ENCODE measurements at regions of chr3 and their contacts with region 1.

Region 1: DNA sequence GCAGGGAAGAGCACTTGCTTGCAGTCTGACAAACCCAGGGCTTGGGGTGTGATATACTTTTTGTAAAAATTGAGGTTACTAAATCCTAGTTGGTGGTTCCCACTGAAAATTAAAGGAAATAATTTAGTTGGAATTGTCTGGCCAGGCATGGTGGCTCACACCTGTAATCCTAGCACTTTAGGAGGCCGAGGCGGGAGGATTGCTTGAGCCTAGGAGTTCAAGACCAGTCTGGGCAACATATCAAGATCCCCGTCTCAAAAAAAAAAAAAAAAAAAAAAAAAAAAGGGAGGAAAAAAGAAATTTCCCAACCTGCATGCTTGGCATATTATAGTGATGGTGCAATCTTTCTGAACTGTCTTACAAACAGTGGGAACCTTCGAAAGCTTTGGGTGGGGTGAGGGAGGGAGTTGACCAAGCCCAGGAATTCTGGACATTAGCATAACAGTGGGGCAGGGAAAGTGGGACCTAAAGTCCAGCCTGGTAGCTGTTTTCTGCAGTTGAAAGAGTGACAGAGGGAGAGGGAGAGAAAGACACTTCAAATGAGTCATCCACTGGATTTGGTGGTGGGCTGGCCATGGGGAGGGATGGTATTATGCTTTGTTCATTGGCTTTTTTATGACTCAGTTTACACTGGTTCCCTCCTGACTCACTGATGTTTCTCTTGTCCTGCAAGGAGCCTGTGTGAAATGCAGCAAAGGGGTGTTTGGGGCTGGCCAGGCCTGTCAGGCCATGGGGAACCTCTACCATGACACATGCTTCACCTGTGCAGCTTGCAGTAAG is 41.1 kb downstream of the LIMD1 start:
- DNase-seq: no peak
- H3K4me3 ChIP-seq: no peak overlapping the region
- H3K27ac ChIP-seq: no peak overlapping the region
- H3K4me1 ChIP-seq: peaks cover 26 to 57% (median 50%) of the 10 kb centered on the region in 4 experiments
- H3K27me3 ChIP-seq: no peaks in the 10 kb centered on the region

Region 2: DNA sequence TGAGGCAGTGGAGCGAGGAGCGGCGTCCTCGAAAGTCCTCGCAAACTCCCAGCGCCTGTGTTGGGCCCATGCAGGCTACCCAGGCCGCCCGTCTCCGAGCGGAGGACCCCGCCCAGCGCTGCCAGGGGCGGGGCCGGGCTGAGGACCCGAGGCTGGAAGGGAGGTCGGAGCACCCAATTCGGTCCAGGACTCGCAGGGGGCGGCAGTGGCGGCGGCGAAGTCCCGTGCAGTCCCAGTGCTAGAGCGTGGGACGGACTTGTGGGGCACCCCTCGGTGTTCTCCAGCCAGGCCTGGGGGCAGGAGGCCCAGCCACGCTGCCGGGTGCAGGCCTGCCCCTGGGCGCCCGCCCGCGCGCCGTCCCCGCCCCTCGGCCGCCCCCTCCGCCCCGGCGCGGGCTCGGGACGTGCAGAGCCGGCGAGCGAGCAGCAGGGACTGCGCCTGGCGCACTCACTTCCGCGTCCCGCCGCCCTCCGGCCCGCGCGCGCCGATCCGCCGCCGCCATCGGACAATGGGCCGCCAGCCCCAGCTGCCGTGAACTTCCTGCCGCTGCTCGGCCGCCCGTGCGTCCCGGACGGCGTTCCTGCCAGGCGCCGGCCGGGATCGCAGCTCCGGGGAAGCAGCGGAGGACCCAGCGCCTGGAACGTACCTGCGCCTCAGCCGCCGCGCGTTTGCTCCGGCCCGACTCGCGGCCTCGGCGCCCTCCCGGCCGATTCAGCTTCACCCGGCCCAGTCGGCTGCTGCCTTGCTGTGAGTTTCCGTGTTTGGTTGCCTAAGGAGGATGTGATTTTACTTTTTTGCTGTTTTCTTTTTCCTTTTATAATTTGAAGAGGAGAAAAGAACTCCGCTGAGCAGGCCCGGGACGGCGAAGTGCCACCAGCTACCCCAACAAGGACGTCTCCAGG is 41.7 kb before region 1 on chr3:
- CTCF ChIA-PET with region 1: interaction called, 10 read pairs
- POLR2A ChIA-PET with region 1: interaction called, 6 read pairs
- DNase-seq: peak; percentile 59 to 84 (median 75)
- H3K4me3 ChIP-seq: peak overlapping the region; percentile 68 to 91 (median 81)
- H3K27ac ChIP-seq: peak overlapping the region in 1 of 2 experiments; percentile 83
- H3K4me1 ChIP-seq: peaks cover 4 to 70% (median 59%) of the 10 kb centered on the region in 4 experiments
- H3K27me3 ChIP-seq: no peaks in the 10 kb centered on the region

Region 3: GRCh38 chr3:45647148-45647619 is 11.5 kb after region 1 on chr3:
- CTCF ChIA-PET with region 1: interaction called, 15 read pairs
- POLR2A ChIA-PET with region 1: interaction called, 4 read pairs
- DNase-seq: peak; percentile 61 to 94 (median 88)
- H3K4me3 ChIP-seq: peak overlapping the region in 1 of 7 experiments; percentile 45
- H3K27ac ChIP-seq: peak overlapping the region; percentile 80 to 88
- H3K4me1 ChIP-seq: peaks cover 7 to 57% (median 51%) of the 10 kb centered on the region in 4 experiments
- H3K27me3 ChIP-seq: no peaks in the 10 kb centered on the region

Region 4: GRCh38 chr3:45701172-45701867 is 65.7 kb after region 1 on chr3:
- CTCF ChIA-PET with region 1: no interaction called
- POLR2A ChIA-PET with region 1: no interaction called
- DNase-seq: no peak
- H3K4me3 ChIP-seq: peak overlapping the region in 2 of 7 experiments; percentile 36 to 40
- H3K27ac ChIP-seq: peak overlapping the region in 1 of 2 experiments; percentile 22
- H3K4me1 ChIP-seq: peaks cover 0 to 17% (median 5%) of the 10 kb centered on the region in 4 experiments
- H3K27me3 ChIP-seq: no peaks in the 10 kb centered on the region

Measured in common myeloid progenitor, CD34-positive (primary cell).